MCF 10A (cell line): ENCODE measurements at regions of chr6 and their contacts with region 1.

Region 1: DNA sequence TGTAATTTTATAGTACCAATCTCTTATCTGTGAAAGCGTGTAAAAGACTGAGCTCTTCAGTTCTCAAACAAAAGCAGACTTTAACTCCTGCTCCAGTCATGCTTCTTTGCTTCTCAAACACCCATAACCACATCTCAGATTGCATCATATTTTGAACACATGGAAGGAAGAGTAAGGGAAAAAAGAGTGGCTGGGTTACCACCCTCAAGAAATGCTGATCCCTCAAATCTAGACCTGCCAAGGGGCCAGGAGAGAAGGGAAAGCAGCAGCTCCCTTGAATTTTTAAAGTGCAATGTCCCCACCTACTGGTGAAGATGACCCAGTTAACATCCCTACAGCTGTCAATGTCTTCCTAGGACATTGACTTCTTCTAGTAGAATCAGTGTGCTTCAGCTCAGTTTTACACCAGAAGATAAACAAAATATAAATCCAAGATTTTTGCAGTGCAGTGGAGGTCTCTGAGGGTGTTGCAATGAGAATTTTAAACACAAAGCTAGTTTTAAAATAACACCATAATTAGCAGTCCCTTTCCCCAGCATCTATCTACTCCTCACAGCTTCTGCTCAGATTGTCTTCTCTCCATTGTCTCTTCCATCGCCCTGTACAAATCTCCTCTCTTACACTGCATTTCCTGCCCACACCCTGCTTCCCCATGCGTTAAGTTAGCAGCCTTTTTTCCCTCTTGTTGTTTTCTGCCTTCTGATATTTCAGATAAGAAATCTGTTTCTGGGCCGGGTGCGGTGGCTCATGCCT is 22.6 kb upstream of the HLA-DQB2 start:
- DNase-seq: peak; percentile 65
- H3K4me3 Mint-ChIP-seq: no peak overlapping the region
- H3K27ac Mint-ChIP-seq: no peak overlapping the region
- H3K4me1 Mint-ChIP-seq: no peaks in the 10 kb centered on the region
- H3K27me3 Mint-ChIP-seq: peaks cover 95% of the 10 kb centered on the region
- CTCF ChIP-seq: peak; percentile 64

Region 2: DNA sequence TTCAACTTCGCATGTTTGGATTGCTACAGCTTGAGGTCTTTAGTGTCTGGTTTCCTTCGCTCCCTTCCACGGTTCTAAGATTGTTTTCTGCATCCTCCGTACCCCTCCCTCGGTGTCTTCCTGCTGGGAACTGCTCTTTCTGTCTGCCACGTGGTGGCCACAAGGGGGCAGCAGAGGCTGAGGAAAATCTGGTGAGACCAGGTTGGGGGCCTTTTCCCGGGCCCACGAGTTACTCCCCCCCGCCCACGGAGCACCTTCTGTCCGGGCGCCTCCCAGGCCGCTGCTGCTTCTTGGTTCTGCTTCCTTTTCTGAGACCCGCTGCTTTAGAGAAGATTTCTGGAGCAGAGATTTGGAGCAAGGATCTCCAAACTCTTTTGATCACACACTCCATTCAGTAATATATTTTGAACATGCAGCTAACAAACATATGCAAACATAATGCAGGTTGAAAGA is 541.0 kb before region 1 on chr6:
- CTCF ChIA-PET with region 1: no interaction called
- POLR2A ChIA-PET with region 1: no interaction called
- intact Hi-C with region 1: loop called (anchors 10 kb)
- DNase-seq: peak; percentile 74
- H3K4me3 Mint-ChIP-seq: peak overlapping the region; percentile 68
- H3K27ac Mint-ChIP-seq: peak overlapping the region; percentile 71
- H3K4me1 Mint-ChIP-seq: peaks cover 9% of the 10 kb centered on the region
- H3K27me3 Mint-ChIP-seq: peaks cover 12% of the 10 kb centered on the region
- CTCF ChIP-seq: peak; percentile 89

Region 3: DNA sequence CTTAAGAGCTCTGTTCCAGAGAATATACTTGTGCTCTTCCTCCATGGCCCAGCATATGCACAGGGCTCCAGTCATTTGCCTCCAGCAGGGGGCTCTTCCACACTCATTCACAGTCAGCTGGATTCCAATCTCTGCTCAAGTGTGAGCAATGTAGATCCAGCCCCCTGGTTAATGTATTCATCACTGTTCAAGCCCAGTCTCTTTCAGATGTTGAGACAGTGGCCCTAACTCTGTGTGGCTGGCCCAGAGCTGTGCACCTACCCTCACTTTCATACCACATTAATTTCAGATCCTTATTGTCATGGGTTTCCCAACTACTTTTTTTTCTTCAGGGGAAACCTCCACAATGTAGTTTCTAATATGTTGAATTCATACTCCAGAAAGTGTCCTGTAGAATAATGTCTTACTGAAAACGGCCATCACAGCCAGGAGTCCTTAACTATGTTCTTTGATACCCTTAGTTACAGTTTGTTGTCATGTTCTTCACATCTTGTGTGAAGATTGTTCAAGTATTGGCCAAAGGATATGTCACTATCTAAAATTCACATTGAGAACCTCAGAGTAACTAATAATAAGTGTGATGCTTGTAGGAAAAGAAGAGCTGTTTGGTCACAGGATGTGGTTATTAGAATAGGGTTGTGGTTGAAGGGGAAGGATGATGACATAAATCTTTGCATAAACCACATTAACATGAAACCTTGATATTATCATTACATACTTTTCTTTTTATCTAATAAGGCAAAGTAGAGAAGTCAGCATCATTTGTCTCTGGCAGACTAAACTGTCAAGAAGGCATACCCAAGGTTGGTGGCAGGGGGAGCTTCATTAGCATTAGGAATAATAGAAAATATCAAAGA is 163.2 kb before region 1 on chr6:
- CTCF ChIA-PET with region 1: no interaction called
- POLR2A ChIA-PET with region 1: no interaction called
- intact Hi-C with region 1: loop called (anchors 1 kb)
- DNase-seq: peak; percentile 37
- H3K4me3 Mint-ChIP-seq: no peak overlapping the region
- H3K27ac Mint-ChIP-seq: no peak overlapping the region
- H3K4me1 Mint-ChIP-seq: peaks cover 7% of the 10 kb centered on the region
- H3K27me3 Mint-ChIP-seq: peaks cover 12% of the 10 kb centered on the region
- CTCF ChIP-seq: no peak

Region 4: GRCh38 chr6:32713241-32713640 is 72.7 kb before region 1 on chr6:
- CTCF ChIA-PET with region 1: interaction called, 13 read pairs
- POLR2A ChIA-PET with region 1: no interaction called
- intact Hi-C with region 1: no loop called
- DNase-seq: no peak
- H3K4me3 Mint-ChIP-seq: no peak overlapping the region
- H3K27ac Mint-ChIP-seq: no peak overlapping the region
- H3K4me1 Mint-ChIP-seq: no peaks in the 10 kb centered on the region
- H3K27me3 Mint-ChIP-seq: peaks cover 52% of the 10 kb centered on the region
- CTCF ChIP-seq: no peak

Region 5: DNA sequence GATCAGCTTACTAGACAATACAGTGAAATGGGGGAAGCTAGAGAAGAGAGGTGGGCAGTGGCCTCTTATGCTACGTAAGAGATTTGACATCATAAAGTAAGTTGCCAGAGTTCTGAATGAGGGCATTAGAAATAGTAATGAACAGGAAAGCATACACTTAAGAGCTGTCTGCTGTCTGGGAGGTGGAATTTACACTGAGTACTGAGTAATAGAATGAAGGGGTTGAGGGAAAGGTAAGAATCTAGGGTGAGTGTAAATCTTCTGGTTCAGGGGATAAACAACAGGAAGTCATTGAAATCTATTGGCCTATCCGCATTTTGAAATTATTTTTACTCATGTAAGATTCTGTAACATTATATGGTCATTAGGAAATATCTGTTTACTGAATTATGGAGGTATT is 119.1 kb after region 1 on chr6:
- CTCF ChIA-PET with region 1: no interaction called
- POLR2A ChIA-PET with region 1: no interaction called
- intact Hi-C with region 1: no loop called
- DNase-seq: no peak
- H3K4me3 Mint-ChIP-seq: no peak overlapping the region
- H3K27ac Mint-ChIP-seq: no peak overlapping the region
- H3K4me1 Mint-ChIP-seq: no peaks in the 10 kb centered on the region
- H3K27me3 Mint-ChIP-seq: no peaks in the 10 kb centered on the region
- CTCF ChIP-seq: no peak